ENCODE measurements at regions of chr9 and their contacts with region 1.

Region 1: DNA sequence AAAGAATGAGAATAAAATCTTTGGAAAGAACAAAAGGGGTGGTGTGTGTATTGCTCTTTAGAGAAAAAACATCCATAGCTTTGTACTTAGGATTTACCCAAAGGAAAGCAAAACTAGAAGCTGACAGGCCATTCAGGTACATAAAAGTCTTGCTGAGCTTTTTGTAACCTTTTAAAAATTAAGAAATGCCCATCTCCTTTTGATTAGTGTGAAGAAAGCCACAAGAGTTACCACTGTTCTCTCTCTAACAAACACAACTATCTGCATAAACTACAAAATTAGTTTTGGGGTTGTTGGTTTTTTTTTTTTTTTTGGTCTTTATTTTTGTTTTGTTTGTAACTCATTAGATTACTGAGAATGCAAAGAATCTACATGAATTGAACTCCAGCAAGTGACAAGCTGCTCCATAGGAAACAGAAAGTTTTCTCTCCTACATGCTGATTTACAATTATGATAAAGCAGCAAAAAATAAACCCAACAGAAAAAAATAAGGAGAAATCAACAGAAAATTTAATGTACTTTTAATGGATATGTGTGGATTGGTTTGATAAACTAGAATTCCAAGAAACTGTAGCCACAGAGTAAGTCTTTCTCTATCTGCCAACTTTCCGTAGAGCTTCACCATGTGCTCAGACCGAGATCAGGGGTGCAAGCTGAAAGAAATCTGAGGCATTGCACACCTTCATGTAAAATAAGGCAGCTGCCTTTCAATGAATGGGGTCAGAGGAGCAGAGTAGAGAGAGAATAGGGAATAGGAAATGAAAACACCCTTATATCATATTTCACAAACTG is 12.3 kb downstream of the BAAT start:
- DNase-seq: no peak
- H3K4me3 Mint-ChIP-seq: no peak overlapping the region
- H3K27ac Mint-ChIP-seq: no peak overlapping the region
- H3K4me1 Mint-ChIP-seq: no peaks in the 10 kb centered on the region
- H3K27me3 Mint-ChIP-seq: no peaks in the 10 kb centered on the region

Region 2: GRCh38 chr9:101184813-101185278 is 187.7 kb before region 1 on chr9:
- CTCF ChIA-PET with region 1: no interaction called
- POLR2A ChIA-PET with region 1: interaction called, 11 read pairs
- DNase-seq: no peak
- H3K4me3 Mint-ChIP-seq: no peak overlapping the region
- H3K27ac Mint-ChIP-seq: no peak overlapping the region
- H3K4me1 Mint-ChIP-seq: no peaks in the 10 kb centered on the region
- H3K27me3 Mint-ChIP-seq: no peaks in the 10 kb centered on the region